ENCODE measurements at regions of chr1 and their contacts with region 1.

Region 1: GRCh38 chr1:201828820-201829774 is at the start of gene IPO9:
- DNase-seq: peak; percentile 88
- H3K4me3 ChIP-seq: peak within 1 kb of the TSS; percentile 79 to 92
- H3K27ac ChIP-seq: peak within 1 kb of the TSS; percentile 93 to 97
- H3K4me1 ChIP-seq: peaks cover 7% of the 10 kb centered on the region
- H3K27me3 ChIP-seq: no peaks in the 10 kb centered on the region
- CTCF ChIP-seq: peak; percentile 94 to 97 (median 96)
- POLR2A ChIP-seq: peak; percentile 68
- total RNA-seq, gene IPO9: 16.9 to 18.9 TPM

Region 2: DNA sequence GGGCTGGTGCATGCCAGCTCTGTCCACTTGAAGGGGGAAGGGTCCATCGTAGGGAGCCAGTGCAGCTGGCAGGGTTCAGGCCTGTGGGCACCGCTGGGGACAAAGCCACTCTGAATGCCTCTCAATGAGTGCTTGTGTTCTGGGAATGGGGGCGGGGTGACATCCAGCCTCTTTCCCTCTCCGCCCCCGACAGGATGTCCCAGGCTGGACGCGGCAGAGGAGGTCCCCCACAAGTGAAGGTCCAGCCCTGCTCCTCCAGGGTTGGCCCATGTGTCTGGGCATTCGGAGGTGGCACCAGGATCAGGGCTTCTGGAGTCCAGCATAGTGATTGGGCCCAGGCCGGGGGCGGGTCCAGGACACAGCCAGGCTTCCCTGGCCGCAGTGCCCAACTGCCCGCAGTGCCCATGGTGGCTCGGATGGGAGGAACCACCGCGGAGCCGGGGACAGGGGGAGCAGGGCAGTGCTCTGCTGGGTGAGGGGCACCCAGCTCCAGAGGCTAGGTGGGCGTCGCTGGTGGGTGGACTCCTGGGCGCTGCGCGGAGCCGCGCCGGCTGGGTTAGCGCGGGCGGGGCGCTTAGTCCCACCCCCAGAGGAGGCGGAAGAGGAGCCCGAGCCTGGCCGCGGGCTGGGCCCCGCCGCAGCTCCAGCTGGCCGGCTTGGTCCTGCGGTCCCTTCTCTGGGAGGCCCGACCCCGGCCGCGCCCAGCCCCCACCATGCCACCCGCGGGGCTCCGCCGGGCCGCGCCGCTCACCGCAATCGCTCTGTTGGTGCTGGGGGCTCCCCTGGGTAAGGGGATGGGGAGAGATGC is 59.4 kb after region 1 on chr1 and contains the start of gene SHISA4:
- intact Hi-C with region 1: loop called (anchors 5 kb)
- DNase-seq: peak; percentile 59
- H3K4me3 ChIP-seq: peak within 1 kb of the TSS; percentile 67 to 73
- H3K27ac ChIP-seq: peak within 1 kb of the TSS; percentile 70 to 77
- H3K4me1 ChIP-seq: peaks cover 3% of the 10 kb centered on the region
- H3K27me3 ChIP-seq: no peaks in the 10 kb centered on the region
- CTCF ChIP-seq: no peak
- POLR2A ChIP-seq: peak; percentile 40
- total RNA-seq, gene SHISA4: 24.5 to 61.9 TPM

Region 3: DNA sequence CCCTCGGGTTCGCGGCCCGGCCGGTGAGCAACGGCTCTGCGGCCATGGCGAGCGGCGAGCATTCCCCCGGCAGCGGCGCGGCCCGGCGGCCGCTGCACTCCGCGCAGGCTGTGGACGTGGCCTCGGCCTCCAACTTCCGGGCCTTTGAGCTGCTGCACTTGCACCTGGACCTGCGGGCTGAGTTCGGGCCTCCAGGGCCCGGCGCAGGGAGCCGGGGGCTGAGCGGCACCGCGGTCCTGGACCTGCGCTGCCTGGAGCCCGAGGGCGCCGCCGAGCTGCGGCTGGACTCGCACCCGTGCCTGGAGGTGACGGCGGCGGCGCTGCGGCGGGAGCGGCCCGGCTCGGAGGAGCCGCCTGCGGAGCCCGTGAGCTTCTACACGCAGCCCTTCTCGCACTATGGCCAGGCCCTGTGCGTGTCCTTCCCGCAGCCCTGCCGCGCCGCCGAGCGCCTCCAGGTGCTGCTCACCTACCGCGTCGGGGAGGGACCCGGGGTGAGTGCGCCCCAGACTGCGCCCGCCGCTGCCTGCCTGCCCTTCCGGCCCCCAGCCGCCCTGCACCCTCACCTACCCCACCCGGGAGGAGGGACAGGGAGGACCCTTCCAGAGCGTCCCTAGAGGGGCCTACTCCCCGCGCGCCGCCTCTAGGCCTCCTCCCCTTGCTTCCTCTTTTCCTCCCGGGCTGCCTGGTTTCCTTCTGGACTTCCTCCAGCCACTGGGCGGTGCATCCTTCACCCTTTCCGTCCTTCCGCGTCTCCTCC is 153.7 kb after region 1 on chr1 and contains the start of gene RNPEP:
- intact Hi-C with region 1: loop called (anchors 5 kb)
- DNase-seq: peak; percentile 51
- H3K4me3 ChIP-seq: peak within 1 kb of the TSS; percentile 69 to 95
- H3K27ac ChIP-seq: peak within 1 kb of the TSS; percentile 81 to 89
- H3K4me1 ChIP-seq: no peaks in the 10 kb centered on the region
- H3K27me3 ChIP-seq: no peaks in the 10 kb centered on the region
- CTCF ChIP-seq: peak in 3 of 4 experiments; percentile 5 to 42 (median 21)
- POLR2A ChIP-seq: peak; percentile 74
- total RNA-seq, gene RNPEP: 70.4 to 104 TPM

Region 4: DNA sequence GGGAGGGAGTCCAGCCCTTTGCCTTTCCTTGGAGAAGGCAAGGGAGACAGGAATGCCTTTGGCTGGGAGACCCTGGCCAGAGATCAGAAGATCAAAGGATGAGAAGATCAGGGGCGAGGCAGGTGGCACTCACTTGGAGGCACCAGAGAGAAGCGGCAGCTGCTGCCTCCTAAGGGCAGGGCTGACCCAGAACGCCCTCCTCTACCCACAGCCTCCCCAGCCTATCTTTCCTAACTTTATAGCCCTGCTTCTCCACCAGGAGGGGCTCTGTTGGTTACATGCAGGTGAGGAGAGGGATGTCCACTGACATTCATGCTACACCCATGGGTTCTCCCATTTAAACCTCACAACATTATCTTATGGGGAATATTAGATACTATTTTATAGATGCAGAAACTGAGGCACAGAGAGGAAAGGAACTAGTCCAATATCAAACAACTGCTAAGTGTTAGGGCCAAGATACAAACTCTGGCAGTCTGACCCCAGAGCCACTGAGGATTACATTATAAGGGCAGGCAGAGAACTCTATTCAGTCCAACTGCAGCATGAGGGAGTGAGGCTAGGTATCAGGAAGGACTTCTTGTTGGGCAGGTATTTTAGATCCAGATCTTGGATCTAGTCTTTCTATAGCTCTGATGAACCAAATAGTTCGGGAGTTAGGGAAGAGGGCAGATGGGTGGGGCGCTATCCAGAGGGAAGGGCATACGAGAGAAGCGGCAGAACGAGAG is 384.4 kb after region 1 on chr1:
- intact Hi-C with region 1: no loop called
- DNase-seq: no peak
- H3K4me3 ChIP-seq: peak overlapping the region; percentile 11 to 30
- H3K27ac ChIP-seq: no peak overlapping the region
- H3K4me1 ChIP-seq: no peaks in the 10 kb centered on the region
- H3K27me3 ChIP-seq: no peaks in the 10 kb centered on the region
- CTCF ChIP-seq: peak in 2 of 4 experiments; percentile 20 to 22
- POLR2A ChIP-seq: no peak

Measured in prostate gland (tissue), 2 donors.